GM12878 (cell line): ENCODE measurements at regions of chr15 and their contacts with region 1.

Region 1: GRCh38 chr15:57138349-57138788 is 219.9 kb downstream of the TCF12 start:
- DNase-seq: no peak
- ATAC-seq: peak; percentile 79
- H3K4me3 ChIP-seq: no peak overlapping the region
- H3K27ac ChIP-seq: no peak overlapping the region
- H3K4me1 ChIP-seq: peaks cover under 1% of the 10 kb centered on the region
- H3K27me3 ChIP-seq: no peaks in the 10 kb centered on the region
- CTCF ChIP-seq: peak; percentile 51 to 69 (median 68)
- EP300 ChIP-seq: no peak
- POLR2A ChIP-seq: no peak
- RAD21 ChIP-seq: peak; percentile 61

Region 2: DNA sequence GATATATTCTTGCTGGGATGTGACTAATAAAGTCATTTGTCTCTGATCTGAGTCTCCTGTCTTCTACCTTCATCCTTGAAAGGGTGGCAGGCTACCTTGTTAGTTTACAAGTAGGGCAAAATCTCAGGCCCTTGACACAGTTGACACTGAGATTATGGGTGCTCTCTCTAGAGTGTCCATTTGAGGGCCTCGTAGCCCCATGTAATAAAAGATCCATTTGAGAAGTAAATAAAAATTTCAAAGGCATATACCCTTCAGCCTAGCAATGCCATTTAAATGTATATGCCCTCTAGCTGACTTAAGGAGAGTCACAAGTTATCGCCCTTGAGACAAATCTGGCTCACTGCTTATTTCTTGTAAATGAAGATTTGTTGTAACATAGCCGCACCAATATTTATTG is 121.3 kb before region 1 on chr15:
- CTCF ChIA-PET with region 1: interaction called, 4 read pairs
- POLR2A ChIA-PET with region 1: no interaction called
- RAD21 ChIA-PET with region 1: interaction called, 3 read pairs
- SMC1A ChIA-PET with region 1: interaction called, 3 read pairs
- in situ Hi-C with region 1: no loop called
- intact Hi-C with region 1: loop called (anchors 10 kb)
- DNase-seq: no peak
- ATAC-seq: peak; percentile 67
- H3K4me3 ChIP-seq: no peak overlapping the region
- H3K27ac ChIP-seq: no peak overlapping the region
- H3K4me1 ChIP-seq: no peaks in the 10 kb centered on the region
- H3K27me3 ChIP-seq: no peaks in the 10 kb centered on the region
- CTCF ChIP-seq: peak in 2 of 3 experiments; percentile 32 to 36; a peak in 2 of 6 replicates
- EP300 ChIP-seq: no peak
- POLR2A ChIP-seq: no peak
- RAD21 ChIP-seq: peak; percentile 65

Region 3: DNA sequence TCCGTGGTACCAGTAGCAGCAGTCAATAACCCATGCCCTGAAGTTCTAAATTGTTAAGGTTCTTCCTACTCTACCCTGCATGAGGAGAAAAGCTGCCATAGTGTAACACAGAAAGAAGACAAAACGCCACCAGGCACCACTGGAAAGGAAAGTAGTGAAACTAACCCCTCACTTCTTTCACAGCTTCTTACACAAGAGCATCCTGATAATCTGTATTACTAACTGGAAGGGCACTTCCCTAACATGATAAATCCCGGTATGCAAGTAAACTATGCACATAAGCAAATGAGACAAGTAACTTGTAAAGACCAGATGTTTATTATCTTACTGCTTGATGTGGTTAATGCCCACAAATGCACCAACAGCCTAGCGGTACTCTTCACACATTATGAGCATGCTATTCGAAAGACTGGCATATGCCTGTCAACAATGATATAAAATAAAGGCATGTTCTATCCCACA is 1469.8 kb after region 1 on chr15:
- CTCF ChIA-PET with region 1: no interaction called
- POLR2A ChIA-PET with region 1: no interaction called
- RAD21 ChIA-PET with region 1: no interaction called
- SMC1A ChIA-PET with region 1: no interaction called
- in situ Hi-C with region 1: no loop called
- intact Hi-C with region 1: no loop called
- DNase-seq: no peak
- ATAC-seq: no peak
- H3K4me3 ChIP-seq: no peak overlapping the region
- H3K27ac ChIP-seq: no peak overlapping the region
- H3K4me1 ChIP-seq: no peaks in the 10 kb centered on the region
- H3K27me3 ChIP-seq: no peaks in the 10 kb centered on the region
- CTCF ChIP-seq: no peak
- EP300 ChIP-seq: no peak
- POLR2A ChIP-seq: no peak
- RAD21 ChIP-seq: no peak